ENCODE measurements at regions of chr16 and their contacts with region 1.

Region 1: GRCh38 chr16:72501739-72502593 is 330.0 kb upstream of the PMFBP1 start:
- DNase-seq: peak; percentile 71
- H3K4me3 Mint-ChIP-seq: no peak overlapping the region
- H3K27ac Mint-ChIP-seq: no peak overlapping the region
- H3K4me1 Mint-ChIP-seq: peaks cover 6% of the 10 kb centered on the region
- H3K27me3 Mint-ChIP-seq: no peaks in the 10 kb centered on the region
- CTCF ChIP-seq: peak; percentile 93

Region 2: DNA sequence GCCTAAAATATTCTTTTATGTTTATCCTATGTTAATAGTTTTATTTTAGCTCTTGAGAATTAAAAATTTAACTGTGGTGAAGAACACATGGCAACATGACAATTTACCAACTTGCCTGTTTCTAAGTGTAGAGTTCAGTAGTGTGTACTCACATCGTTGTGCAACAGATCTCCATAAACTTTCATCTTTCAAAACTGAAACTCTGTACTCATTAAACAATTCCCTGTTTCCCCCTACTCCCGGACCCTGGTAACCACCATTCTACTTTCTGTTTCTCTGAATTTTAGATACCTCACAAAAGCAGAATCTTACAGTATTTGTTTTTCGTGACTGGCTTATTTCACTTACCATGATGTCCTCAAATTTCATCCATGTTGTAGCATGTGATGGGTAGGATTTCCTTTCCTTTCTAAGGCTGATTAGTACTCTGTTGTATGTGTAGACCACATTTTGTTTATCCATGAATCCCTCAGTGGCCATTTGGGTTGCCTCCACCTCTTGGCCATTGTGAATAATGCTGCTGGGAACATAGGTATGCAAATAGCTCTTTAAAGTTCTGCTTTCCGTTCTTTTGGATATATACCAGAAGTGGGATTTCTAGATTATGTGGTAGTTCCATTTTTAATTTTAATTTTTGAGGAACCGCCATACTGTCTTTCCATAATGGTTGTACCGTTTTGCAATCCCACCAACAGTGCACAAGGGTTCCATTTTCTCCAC is 589.3 kb before region 1 on chr16:
- CTCF ChIA-PET with region 1: no interaction called
- POLR2A ChIA-PET with region 1: no interaction called
- intact Hi-C with region 1: no loop called
- DNase-seq: no peak
- H3K4me3 Mint-ChIP-seq: no peak overlapping the region
- H3K27ac Mint-ChIP-seq: no peak overlapping the region
- H3K4me1 Mint-ChIP-seq: peaks cover 6% of the 10 kb centered on the region
- H3K27me3 Mint-ChIP-seq: no peaks in the 10 kb centered on the region
- CTCF ChIP-seq: no peak

Region 3: GRCh38 chr16:72284042-72284789 is 217.8 kb before region 1 on chr16:
- CTCF ChIA-PET with region 1: no interaction called
- POLR2A ChIA-PET with region 1: no interaction called
- intact Hi-C with region 1: no loop called
- DNase-seq: no peak
- H3K4me3 Mint-ChIP-seq: no peak overlapping the region
- H3K27ac Mint-ChIP-seq: peak overlapping the region; percentile 37
- H3K4me1 Mint-ChIP-seq: peaks cover 24% of the 10 kb centered on the region
- H3K27me3 Mint-ChIP-seq: no peaks in the 10 kb centered on the region
- CTCF ChIP-seq: no peak

Region 4: DNA sequence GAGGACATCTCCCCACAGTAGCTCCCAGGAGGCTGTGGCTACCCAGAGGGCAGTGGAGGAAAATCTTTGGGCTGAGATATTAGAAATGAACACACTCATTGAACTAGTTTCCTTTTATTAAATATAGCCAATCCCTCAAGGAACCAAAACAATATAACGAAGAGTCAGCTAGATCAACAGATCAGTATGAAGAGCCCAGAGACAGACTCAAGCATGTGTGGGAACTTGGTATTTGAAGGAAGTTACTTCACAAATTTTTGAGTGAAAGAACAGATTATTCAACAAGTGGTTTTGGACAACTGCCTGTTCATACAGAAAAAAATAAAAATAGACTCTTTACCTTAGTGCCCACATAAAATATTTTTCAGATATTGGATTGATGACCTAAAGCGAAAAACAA is 146.4 kb before region 1 on chr16:
- CTCF ChIA-PET with region 1: no interaction called
- POLR2A ChIA-PET with region 1: no interaction called
- intact Hi-C with region 1: no loop called
- DNase-seq: no peak
- H3K4me3 Mint-ChIP-seq: no peak overlapping the region
- H3K27ac Mint-ChIP-seq: no peak overlapping the region
- H3K4me1 Mint-ChIP-seq: no peaks in the 10 kb centered on the region
- H3K27me3 Mint-ChIP-seq: no peaks in the 10 kb centered on the region
- CTCF ChIP-seq: no peak

Region 5: GRCh38 chr16:72665226-72665546 is 163.2 kb after region 1 on chr16:
- CTCF ChIA-PET with region 1: no interaction called
- POLR2A ChIA-PET with region 1: no interaction called
- intact Hi-C with region 1: no loop called
- DNase-seq: no peak
- H3K4me3 Mint-ChIP-seq: peak overlapping the region; percentile 99
- H3K27ac Mint-ChIP-seq: peak overlapping the region; percentile 96
- H3K4me1 Mint-ChIP-seq: no peaks in the 10 kb centered on the region
- H3K27me3 Mint-ChIP-seq: no peaks in the 10 kb centered on the region
- CTCF ChIP-seq: no peak

Region 6: GRCh38 chr16:72818236-72818845 is 316.4 kb after region 1 on chr16:
- CTCF ChIA-PET with region 1: interaction called, 3 read pairs
- POLR2A ChIA-PET with region 1: no interaction called
- intact Hi-C with region 1: loop called (anchors 10 kb)
- DNase-seq: no peak
- H3K4me3 Mint-ChIP-seq: no peak overlapping the region
- H3K27ac Mint-ChIP-seq: no peak overlapping the region
- H3K4me1 Mint-ChIP-seq: no peaks in the 10 kb centered on the region
- H3K27me3 Mint-ChIP-seq: no peaks in the 10 kb centered on the region
- CTCF ChIP-seq: no peak

Region 7: DNA sequence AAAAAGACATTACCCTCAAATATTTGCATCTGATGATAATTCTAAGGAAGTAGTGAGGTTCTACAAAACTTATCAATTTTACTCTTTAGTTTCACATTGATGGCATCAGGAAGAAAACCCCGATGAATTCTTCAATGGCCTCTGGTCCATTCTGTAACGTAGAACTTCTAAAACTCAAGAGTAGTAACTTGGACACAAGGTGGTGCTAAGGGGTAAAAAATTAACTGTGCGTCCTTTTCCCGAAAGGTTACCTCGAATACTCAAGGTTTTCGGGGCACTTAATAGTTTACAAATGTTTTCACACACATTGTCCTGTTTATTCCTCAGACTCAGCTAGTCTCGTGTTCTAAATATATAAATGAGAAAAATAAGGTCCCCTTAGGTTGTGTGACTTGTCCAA is 1063.3 kb after region 1 on chr16:
- CTCF ChIA-PET with region 1: no interaction called
- POLR2A ChIA-PET with region 1: no interaction called
- intact Hi-C with region 1: loop called (anchors 5 kb)
- DNase-seq: peak; percentile 43
- H3K4me3 Mint-ChIP-seq: no peak overlapping the region
- H3K27ac Mint-ChIP-seq: no peak overlapping the region
- H3K4me1 Mint-ChIP-seq: no peaks in the 10 kb centered on the region
- H3K27me3 Mint-ChIP-seq: peaks cover 94% of the 10 kb centered on the region
- CTCF ChIP-seq: peak; percentile 43